Psoas muscle (tissue), 8 donors: ENCODE measurements at regions of chrX and their contacts with region 1.

Region 1: GRCh38 chrX:69538321-69538876 is 34.3 kb downstream of the NALF2 start:
- DNase-seq: peak; percentile 78 to 90
- ATAC-seq: peak; percentile 91 to 99 (median 94)
- H3K4me3 ChIP-seq: peak overlapping the region; percentile 66
- H3K27ac ChIP-seq: no peak overlapping the region
- H3K4me1 ChIP-seq: no peaks in the 10 kb centered on the region
- H3K27me3 ChIP-seq: peaks cover 0 to 30% (median 0%) of the 10 kb centered on the region in 3 donors
- CTCF ChIP-seq: peak; percentile 79

Region 2: DNA sequence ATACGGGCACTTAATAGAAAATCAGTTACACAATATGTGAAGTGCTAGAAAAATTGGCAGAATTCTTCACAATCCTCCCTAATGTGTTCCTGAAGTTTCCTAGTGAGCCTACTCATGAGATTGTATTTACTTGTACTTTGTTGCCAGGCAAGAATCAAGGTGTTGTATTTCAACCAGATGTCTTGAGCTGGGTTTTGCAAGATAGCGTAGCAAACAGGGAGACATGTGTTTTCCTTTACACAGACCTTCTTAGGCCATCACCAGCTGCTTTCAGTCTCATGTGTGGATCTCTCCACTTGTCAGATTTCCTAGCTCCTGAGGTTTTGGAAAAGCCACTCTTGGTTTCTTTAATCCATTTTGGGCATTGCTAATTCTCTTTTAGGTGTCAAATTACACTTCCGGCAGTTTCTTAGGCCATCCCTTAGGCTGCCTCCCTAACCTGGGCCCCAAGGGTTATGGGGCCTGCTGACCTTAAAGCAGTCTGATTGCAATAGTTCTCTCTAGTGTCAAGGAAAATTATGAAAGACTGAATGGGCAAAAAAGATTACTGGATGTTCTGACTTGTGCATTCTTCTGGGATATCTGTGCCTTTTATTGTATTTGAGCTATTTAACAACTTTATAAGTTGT is 65.3 kb after region 1 on chrX:
- intact Hi-C with region 1: loop called in 1 of 2 experiments (anchors 1 kb)
- DNase-seq: no peak
- ATAC-seq: peak in 1 of 4 donors; percentile 52
- H3K4me3 ChIP-seq: no peak overlapping the region
- H3K27ac ChIP-seq: no peak overlapping the region
- H3K4me1 ChIP-seq: no peaks in the 10 kb centered on the region
- H3K27me3 ChIP-seq: peaks cover 0 to 27% (median 0%) of the 10 kb centered on the region in 3 donors
- CTCF ChIP-seq: no peak

Region 3: DNA sequence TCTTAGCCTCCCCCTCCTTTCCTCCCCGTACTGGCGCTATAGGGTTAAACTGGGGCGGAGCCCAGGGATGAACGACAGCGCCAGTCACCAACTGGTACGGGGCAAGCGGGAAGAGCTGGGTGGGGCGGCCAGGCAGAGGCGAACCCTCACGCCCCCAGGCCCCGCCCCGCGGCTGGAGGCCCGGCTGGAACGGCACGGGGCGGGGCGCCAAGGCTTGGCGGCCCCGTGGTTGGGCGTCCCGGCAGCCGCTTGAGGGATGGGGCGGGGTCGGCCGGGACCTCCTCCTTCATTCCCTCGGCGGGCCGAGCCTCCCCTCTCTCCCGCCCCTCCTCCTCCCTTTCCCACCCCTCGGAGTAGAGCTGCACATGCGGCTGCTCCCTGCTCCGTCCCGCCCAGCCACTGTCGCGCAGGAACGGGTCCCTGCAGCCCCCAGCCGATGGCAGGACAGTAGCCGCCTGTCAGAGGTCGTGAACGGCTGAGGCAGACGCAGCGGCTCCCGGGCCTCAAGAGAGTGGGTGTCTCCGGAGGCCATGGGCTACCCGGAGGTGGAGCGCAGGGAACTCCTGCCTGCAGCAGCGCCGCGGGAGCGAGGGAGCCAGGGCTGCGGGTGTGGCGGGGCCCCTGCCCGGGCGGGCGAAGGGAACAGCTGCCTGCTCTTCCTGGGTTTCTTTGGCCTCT is 77.5 kb after region 1 on chrX and contains the start of gene EDA:
- intact Hi-C with region 1: loop called (anchors 2 to 5 kb)
- DNase-seq: peak; percentile 88 to 93
- ATAC-seq: peak; percentile 95 to 99 (median 98)
- H3K4me3 ChIP-seq: peak within 1 kb of the TSS; percentile 73
- H3K27ac ChIP-seq: peak within 1 kb of the TSS; percentile 30
- H3K4me1 ChIP-seq: no peaks in the 10 kb centered on the region
- H3K27me3 ChIP-seq: peaks cover 0 to 12% (median 0%) of the 10 kb centered on the region in 3 donors
- CTCF ChIP-seq: no peak
- total RNA-seq, gene EDA: 0.49 to 2.5 (median 1.1) TPM

Region 4: GRCh38 chrX:70030301-70030767 is 491.9 kb after region 1 on chrX:
- intact Hi-C with region 1: loop called (anchors 5 kb)
- DNase-seq: no peak
- ATAC-seq: peak; percentile 55 to 84 (median 72)
- H3K4me3 ChIP-seq: no peak overlapping the region
- H3K27ac ChIP-seq: no peak overlapping the region
- H3K4me1 ChIP-seq: no peaks in the 10 kb centered on the region
- H3K27me3 ChIP-seq: peaks cover 0 to 35% (median 0%) of the 10 kb centered on the region in 3 donors
- CTCF ChIP-seq: peak; percentile 70

Region 5: DNA sequence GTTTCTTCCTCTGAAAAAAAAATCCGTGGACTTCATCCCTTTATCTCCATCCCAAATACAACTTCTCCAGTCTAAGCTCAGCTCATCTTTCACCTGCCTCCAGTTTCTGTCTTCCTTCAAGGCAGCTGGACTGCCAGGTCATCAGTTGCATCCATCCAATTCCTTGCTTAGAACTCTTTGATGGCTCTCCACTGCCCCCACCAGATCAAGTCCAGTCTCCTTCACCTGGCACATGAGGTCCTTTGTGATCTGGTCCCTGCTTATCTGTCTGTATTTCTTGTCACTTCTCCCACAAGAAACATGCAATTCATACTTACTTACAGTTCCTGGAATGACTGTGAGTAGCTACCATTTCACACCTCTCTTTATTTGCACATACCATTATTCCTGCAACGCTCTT is 557.7 kb after region 1 on chrX:
- intact Hi-C with region 1: loop called (anchors 1 to 10 kb)
- DNase-seq: no peak
- ATAC-seq: no peak
- H3K4me3 ChIP-seq: no peak overlapping the region
- H3K27ac ChIP-seq: no peak overlapping the region
- H3K4me1 ChIP-seq: no peaks in the 10 kb centered on the region
- H3K27me3 ChIP-seq: peaks cover 0 to 8% (median 0%) of the 10 kb centered on the region in 3 donors
- CTCF ChIP-seq: no peak